ENCODE measurements at regions of chr1 and their contacts with region 1.

Region 1: DNA sequence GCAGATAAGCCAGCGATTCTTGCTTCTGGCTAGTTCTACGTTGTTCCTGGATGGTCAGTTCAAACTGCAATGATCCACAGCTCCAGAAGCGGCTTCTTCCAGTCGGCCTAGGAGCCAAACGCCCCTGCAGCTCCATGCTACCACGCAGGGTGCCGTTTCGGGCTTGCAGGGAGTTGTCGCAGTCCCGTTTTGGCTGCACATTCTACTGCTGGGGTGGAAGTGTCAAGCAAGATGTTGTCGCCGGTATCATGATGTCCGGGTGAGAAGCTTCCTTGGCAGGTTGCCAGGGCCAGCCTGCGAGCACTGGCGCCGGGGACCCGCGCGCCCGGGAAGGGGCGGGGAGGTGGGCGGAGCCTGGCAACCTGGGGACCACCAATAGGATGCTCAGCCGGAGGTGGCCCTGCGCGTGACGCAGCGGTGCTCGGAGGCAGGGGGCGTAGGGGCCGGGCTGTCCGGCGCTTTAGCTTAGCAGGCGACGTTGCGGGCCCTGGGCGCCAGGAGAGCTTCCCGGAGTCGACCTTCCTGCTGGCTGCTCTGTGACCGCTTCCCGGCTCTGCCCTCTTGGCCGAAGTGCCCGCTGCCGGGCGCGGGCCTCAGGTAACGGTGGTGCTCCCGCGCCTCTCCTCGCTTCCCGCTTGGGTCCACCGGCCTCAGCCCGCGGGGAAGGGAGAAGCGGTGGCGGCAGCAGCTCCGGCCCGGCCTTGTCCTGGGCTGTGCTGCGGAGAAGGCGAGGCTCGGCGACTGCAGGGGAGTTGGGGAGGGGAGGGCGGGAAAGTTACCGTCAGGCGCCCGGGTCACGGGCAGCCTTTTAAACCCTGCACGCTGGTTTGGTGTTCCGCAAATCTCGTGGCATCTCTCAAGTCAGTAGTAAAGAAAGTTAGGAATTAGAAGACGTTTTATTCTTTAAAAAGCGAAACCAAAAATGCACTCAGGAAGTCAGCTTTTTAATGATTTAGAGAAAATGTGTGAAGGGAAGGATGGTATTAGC is at the start of gene SOAT1:
- DNase-seq: peak; percentile 89
- H3K4me3 Mint-ChIP-seq: peak within 1 kb of the TSS; percentile 94
- H3K27ac Mint-ChIP-seq: peak within 1 kb of the TSS; percentile 86
- H3K4me1 Mint-ChIP-seq: peaks cover 34% of the 10 kb centered on the region
- H3K27me3 Mint-ChIP-seq: no peaks in the 10 kb centered on the region
- total RNA-seq, gene SOAT1: 39.2 and 40.3 TPM in 2 replicates

Region 2: GRCh38 chr1:178542560-178543356 is 750.9 kb before region 1 on chr1:
- intact Hi-C with region 1: loop called (anchors 5 kb)
- DNase-seq: peak; percentile 83
- H3K4me3 Mint-ChIP-seq: peak overlapping the region; percentile 87
- H3K27ac Mint-ChIP-seq: peak overlapping the region; percentile 72
- H3K4me1 Mint-ChIP-seq: peaks cover 3% of the 10 kb centered on the region
- H3K27me3 Mint-ChIP-seq: no peaks in the 10 kb centered on the region

Region 3: GRCh38 chr1:179025125-179025974 is 268.3 kb before region 1 on chr1 and contains the start of gene FAM20B:
- intact Hi-C with region 1: loop called (anchors 5 kb)
- DNase-seq: peak; percentile 84
- H3K4me3 Mint-ChIP-seq: peak within 1 kb of the TSS; percentile 93
- H3K27ac Mint-ChIP-seq: peak within 1 kb of the TSS; percentile 84
- H3K4me1 Mint-ChIP-seq: peaks cover 32% of the 10 kb centered on the region
- H3K27me3 Mint-ChIP-seq: peaks cover 15% of the 10 kb centered on the region
- total RNA-seq, gene FAM20B: 38.1 and 39.7 TPM in 2 replicates

Region 4: GRCh38 chr1:179081687-179082332 is 211.8 kb before region 1 on chr1 and contains the start of gene TOR3A:
- intact Hi-C with region 1: loop called (anchors 2 kb)
- DNase-seq: peak; percentile 75
- H3K4me3 Mint-ChIP-seq: peak within 1 kb of the TSS; percentile 97
- H3K27ac Mint-ChIP-seq: peak within 1 kb of the TSS; percentile 96
- H3K4me1 Mint-ChIP-seq: peaks cover 20% of the 10 kb centered on the region
- H3K27me3 Mint-ChIP-seq: no peaks in the 10 kb centered on the region
- total RNA-seq, gene TOR3A: 34.1 and 35.3 TPM in 2 replicates

Region 5: GRCh38 chr1:179121159-179121938 is 172.3 kb before region 1 on chr1:
- intact Hi-C with region 1: loop called (anchors 2 kb)
- DNase-seq: no peak
- H3K4me3 Mint-ChIP-seq: no peak overlapping the region
- H3K27ac Mint-ChIP-seq: no peak overlapping the region
- H3K4me1 Mint-ChIP-seq: peaks cover 8% of the 10 kb centered on the region
- H3K27me3 Mint-ChIP-seq: no peaks in the 10 kb centered on the region

Region 6: DNA sequence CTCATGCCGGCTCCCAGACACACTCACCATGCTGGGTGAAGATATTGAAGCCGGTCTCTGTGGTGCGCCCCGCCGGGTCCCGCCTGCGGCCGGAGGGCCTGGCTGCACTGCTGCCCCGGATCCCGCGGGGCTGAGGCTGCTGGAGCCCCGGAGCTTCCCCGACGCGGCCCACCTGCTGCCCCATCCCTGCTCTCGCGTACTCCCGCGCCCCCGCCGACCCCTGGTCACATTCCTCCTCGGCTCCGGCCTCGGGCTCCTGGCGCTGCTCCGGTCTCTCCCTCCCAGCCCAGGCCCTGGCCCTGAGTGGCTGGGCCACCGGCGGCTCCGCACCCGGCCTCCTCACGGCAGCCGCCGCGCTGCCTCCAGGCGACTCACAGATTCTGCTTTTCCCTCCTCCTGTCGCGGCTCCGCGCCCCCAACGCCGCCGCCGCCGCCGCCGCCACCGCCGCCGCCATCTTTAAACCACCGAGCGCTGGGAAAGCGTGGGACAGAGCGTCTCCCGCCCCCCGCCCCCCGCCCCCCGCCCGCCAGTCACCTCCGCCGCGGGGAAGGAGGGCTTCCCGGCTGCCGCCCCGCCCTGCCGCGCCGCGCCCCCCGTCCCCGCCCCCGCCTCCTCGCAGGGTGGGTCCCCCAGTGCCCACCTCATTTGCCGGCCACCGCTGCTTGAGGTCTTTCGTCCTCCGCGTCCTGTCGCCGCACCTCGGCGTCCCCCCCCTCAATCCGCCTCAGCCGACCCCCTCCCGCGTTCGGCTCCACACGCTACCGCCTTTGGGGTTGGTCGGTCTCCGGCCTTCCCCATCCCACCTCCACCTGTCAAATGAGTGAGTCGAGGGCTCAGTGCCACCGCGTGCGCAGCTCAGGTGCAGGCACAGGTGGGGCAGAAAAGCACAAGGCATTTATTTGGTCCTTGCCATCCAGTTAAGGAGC is 64.2 kb before region 1 on chr1 and contains the start of gene ABL2:
- intact Hi-C with region 1: loop called (anchors 2 kb)
- DNase-seq: peak; percentile 34
- H3K4me3 Mint-ChIP-seq: peak within 1 kb of the TSS; percentile 91
- H3K27ac Mint-ChIP-seq: peak within 1 kb of the TSS; percentile 79
- H3K4me1 Mint-ChIP-seq: peaks cover 24% of the 10 kb centered on the region
- H3K27me3 Mint-ChIP-seq: peaks cover 8% of the 10 kb centered on the region
- total RNA-seq, gene ABL2: 7.7 and 8.5 TPM in 2 replicates

Region 7: GRCh38 chr1:179322557-179322956 is 28.9 kb after region 1 on chr1:
- intact Hi-C with region 1: loop called (anchors 1 kb)
- DNase-seq: no peak
- H3K4me3 Mint-ChIP-seq: no peak overlapping the region
- H3K27ac Mint-ChIP-seq: no peak overlapping the region
- H3K4me1 Mint-ChIP-seq: peaks cover 22% of the 10 kb centered on the region
- H3K27me3 Mint-ChIP-seq: no peaks in the 10 kb centered on the region